ENCODE measurements at regions of chr4 and their contacts with region 1.

Region 1: DNA sequence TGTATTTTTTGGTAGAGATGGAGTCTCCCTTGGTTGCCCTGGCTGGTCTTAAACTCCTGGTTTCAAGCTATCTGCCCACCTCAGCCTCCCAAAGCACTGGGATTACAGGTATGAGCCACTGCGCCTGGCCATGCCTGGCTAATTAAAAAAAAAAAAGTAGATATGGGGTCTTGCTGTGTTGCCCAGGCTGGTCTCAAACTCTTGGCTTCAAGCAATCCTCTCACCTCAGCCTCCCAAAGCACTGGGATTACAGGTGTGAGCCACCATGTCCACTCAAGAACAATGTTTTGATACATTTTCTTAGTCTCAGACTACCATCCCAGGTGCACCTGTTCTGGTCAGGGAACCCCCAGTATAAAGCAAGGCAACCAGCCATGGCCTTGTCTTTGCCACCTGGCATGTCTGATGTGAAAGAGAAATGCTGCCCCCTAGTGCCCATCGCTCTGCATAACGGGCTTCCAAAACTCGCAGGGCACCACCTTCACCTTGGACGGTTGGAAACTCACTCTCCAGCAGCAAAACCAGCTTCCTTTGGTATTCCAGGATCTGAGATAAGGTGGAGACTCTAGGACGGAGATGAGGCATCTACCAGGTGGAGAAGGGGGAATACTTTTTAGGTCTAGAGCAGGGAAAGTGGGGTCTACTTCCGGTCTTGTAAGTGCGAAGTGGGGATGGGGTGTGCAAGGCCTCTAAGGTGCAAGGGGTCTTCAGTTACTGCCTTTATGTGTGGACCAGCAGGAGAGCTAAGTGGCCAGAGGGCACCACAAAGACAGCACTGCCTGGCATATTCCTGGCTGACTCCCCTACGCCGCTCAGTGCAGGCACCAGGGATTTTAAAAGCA is 47.7 kb upstream of the AFAP1 start:
- DNase-seq: peak; percentile 48 to 74 (median 67)
- ATAC-seq: peak; percentile 83
- H3K4me3 ChIP-seq: no peak overlapping the region
- H3K4me3 Mint-ChIP-seq: no peak overlapping the region
- H3K27ac ChIP-seq: no peak overlapping the region
- H3K27ac Mint-ChIP-seq: peak overlapping the region in 1 of 9 donors; percentile 67
- H3K4me1 ChIP-seq: no peaks in the 10 kb centered on the region
- H3K4me1 Mint-ChIP-seq: peaks cover 0 to 11% (median 9%) of the 10 kb centered on the region in 7 donors
- H3K27me3 ChIP-seq: no peaks in the 10 kb centered on the region
- H3K27me3 Mint-ChIP-seq: peaks cover 0 to 3% (median 0%) of the 10 kb centered on the region in 5 donors

Region 2: GRCh38 chr4:7192252-7193029 is 794.9 kb before region 1 on chr4 and contains the start of gene SORCS2:
- CTCF ChIA-PET with region 1: no interaction called
- POLR2A ChIA-PET with region 1: no interaction called
- intact Hi-C with region 1: loop called in 1 of 2 experiments (anchors 5 kb)
- DNase-seq: peak in 7 of 9 donors; percentile 25 to 68 (median 34)
- ATAC-seq: peak; percentile 73
- H3K4me3 ChIP-seq: no peak within 1 kb of the TSS
- H3K4me3 Mint-ChIP-seq: peak within 1 kb of the TSS in 8 of 10 donors; percentile 43 to 76 (median 56)
- H3K27ac ChIP-seq: no peak within 1 kb of the TSS
- H3K27ac Mint-ChIP-seq: no peak within 1 kb of the TSS
- H3K4me1 ChIP-seq: no peaks in the 10 kb centered on the region
- H3K4me1 Mint-ChIP-seq: peaks cover 0 to 7% (median 0%) of the 10 kb centered on the region in 7 donors
- H3K27me3 ChIP-seq: peaks cover 0 to 6% of the 10 kb centered on the region in 2 donors
- H3K27me3 Mint-ChIP-seq: peaks cover 38 to 70% (median 60%) of the 10 kb centered on the region in 5 donors
- total RNA-seq, gene SORCS2: 0.10 TPM in 1 of 5 experiments, not detected in the others

Region 3: DNA sequence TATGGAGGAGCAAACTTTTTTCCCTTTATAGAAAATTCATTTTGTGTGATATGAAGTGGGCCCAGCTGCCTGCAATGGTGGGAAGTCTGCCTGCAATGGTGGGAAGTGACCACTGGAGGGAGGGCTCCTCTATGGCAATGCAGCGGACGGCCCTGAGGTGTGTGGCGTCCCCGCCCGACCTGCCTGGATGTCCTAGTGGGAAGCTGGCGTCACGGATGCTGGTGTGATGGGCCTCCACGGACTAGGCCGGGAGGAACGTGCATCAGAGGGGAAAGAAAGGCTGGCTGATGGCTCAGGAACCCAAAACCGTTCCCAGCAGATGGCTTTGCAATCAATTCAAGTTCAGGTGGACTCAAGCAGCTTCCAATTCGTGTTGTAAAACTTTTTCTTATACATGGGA is 225.6 kb before region 1 on chr4:
- CTCF ChIA-PET with region 1: interaction called, 4 read pairs
- POLR2A ChIA-PET with region 1: no interaction called
- intact Hi-C with region 1: loop called in 1 of 2 experiments (anchors 1 kb)
- DNase-seq: peak in 8 of 9 donors; percentile 33 to 65 (median 52)
- ATAC-seq: peak; percentile 74
- H3K4me3 ChIP-seq: no peak overlapping the region
- H3K4me3 Mint-ChIP-seq: peak overlapping the region in 5 of 10 donors; percentile 27 to 49 (median 37)
- H3K27ac ChIP-seq: peak overlapping the region; percentile 10
- H3K27ac Mint-ChIP-seq: peak overlapping the region; percentile 47 to 100 (median 92)
- H3K4me1 ChIP-seq: peaks cover 18 to 30% of the 10 kb centered on the region in 2 donors
- H3K4me1 Mint-ChIP-seq: peaks cover 13 to 49% (median 37%) of the 10 kb centered on the region in 7 donors
- H3K27me3 ChIP-seq: no peaks in the 10 kb centered on the region
- H3K27me3 Mint-ChIP-seq: no peaks in the 10 kb centered on the region

Region 4: DNA sequence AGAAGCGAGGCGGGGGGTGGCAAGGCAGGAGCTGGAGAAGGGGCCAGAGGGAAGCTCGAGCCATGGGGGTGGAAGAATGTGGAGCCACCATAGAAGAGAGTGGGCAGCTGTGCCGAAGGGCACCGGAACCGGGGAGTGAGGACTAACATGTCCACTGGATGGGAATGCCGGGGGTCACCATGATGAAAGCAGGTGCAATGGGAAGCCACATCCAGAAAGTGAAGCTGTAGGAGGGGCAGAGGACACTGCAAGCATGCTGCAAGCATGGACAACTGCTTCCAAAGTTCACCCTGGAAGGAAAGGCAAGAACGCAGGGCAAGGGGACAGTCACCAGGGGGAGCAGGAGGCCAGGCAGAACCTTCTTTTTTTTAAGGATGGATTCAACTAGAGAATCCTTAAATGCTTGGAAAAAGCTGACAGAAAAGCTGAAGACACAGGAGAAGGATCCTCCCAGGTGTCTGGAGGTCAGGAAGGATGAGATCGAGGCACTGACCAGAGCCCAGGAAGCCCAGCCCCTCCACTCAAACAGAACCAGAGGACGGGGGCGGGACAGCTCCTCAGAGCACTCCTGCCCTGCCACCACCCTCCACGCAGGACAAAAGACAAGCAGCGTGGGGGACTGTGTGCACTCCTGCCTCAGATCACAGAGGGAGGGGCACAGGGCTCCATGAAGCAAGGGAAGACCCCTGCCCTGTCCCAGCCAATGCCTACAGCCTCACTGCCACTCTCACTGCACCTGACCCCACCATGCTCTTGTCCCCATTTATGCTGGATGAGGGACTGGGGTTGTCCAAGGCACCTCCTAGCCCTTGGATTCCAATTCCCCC is 216.9 kb before region 1 on chr4:
- CTCF ChIA-PET with region 1: interaction called, 4 read pairs
- POLR2A ChIA-PET with region 1: no interaction called
- intact Hi-C with region 1: loop called in 1 of 2 experiments (anchors 1 kb)
- DNase-seq: peak in 1 of 9 donors; percentile 4
- ATAC-seq: no peak
- H3K4me3 ChIP-seq: peak overlapping the region; percentile 30
- H3K4me3 Mint-ChIP-seq: peak overlapping the region; percentile 45 to 86 (median 70)
- H3K27ac ChIP-seq: peak overlapping the region; percentile 47
- H3K27ac Mint-ChIP-seq: peak overlapping the region; percentile 48 to 90 (median 79)
- H3K4me1 ChIP-seq: peaks cover 8 to 16% of the 10 kb centered on the region in 2 donors
- H3K4me1 Mint-ChIP-seq: peaks cover 8 to 37% (median 31%) of the 10 kb centered on the region in 7 donors
- H3K27me3 ChIP-seq: no peaks in the 10 kb centered on the region
- H3K27me3 Mint-ChIP-seq: no peaks in the 10 kb centered on the region

Region 5: GRCh38 chr4:7843831-7844593 is 143.4 kb before region 1 on chr4:
- CTCF ChIA-PET with region 1: interaction called, 8 read pairs
- POLR2A ChIA-PET with region 1: no interaction called
- intact Hi-C with region 1: loop called (anchors 1 kb)
- DNase-seq: peak; percentile 12 to 66 (median 42)
- ATAC-seq: peak; percentile 84
- H3K4me3 ChIP-seq: no peak overlapping the region
- H3K4me3 Mint-ChIP-seq: peak overlapping the region in 2 of 10 donors; percentile 1 to 45
- H3K27ac ChIP-seq: no peak overlapping the region
- H3K27ac Mint-ChIP-seq: peak overlapping the region in 4 of 9 donors; percentile 10 to 62 (median 22)
- H3K4me1 ChIP-seq: peaks cover 4 to 6% of the 10 kb centered on the region in 2 donors
- H3K4me1 Mint-ChIP-seq: peaks cover 17 to 46% (median 40%) of the 10 kb centered on the region in 7 donors
- H3K27me3 ChIP-seq: no peaks in the 10 kb centered on the region
- H3K27me3 Mint-ChIP-seq: no peaks in the 10 kb centered on the region

Region 6: GRCh38 chr4:7863911-7864681 is 123.3 kb before region 1 on chr4:
- CTCF ChIA-PET with region 1: no interaction called
- POLR2A ChIA-PET with region 1: no interaction called
- intact Hi-C with region 1: loop called in 1 of 2 experiments (anchors 2 kb)
- DNase-seq: peak in 7 of 9 donors; percentile 20 to 68 (median 38)
- ATAC-seq: peak; percentile 60
- H3K4me3 ChIP-seq: no peak overlapping the region
- H3K4me3 Mint-ChIP-seq: peak overlapping the region in 7 of 10 donors; percentile 36 to 75 (median 65)
- H3K27ac ChIP-seq: no peak overlapping the region
- H3K27ac Mint-ChIP-seq: peak overlapping the region; percentile 67 to 96 (median 89)
- H3K4me1 ChIP-seq: peaks cover 0 to 10% of the 10 kb centered on the region in 2 donors
- H3K4me1 Mint-ChIP-seq: peaks cover 8 to 45% (median 33%) of the 10 kb centered on the region in 7 donors
- H3K27me3 ChIP-seq: no peaks in the 10 kb centered on the region
- H3K27me3 Mint-ChIP-seq: peaks cover 0 to 6% (median 0%) of the 10 kb centered on the region in 5 donors

Region 7: DNA sequence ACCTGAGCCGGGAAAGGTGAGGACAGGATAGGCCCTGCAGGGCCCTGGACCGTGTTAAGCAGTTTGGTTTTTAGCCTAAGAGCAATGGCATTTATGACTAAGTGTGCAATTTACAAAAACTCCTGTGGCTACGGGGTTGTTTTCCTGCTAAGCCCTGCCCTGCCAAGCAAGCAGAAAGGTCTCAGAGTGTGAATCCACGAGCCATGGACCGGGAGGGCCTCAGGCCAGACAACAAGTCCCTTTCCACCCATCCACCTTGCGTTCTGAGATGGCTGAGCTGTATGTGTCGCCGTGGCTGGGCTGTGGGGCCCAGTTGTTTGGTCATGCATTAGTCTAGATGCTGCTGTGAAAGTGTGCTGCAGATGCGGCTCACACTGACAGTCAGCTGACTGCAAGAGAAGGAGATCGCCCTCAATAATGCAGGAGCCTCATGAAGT is 13.8 kb before region 1 on chr4:
- CTCF ChIA-PET with region 1: interaction called, 4 read pairs
- POLR2A ChIA-PET with region 1: no interaction called
- intact Hi-C with region 1: loop called in 1 of 2 experiments (anchors 1 kb)
- DNase-seq: no peak
- ATAC-seq: no peak
- H3K4me3 ChIP-seq: no peak overlapping the region
- H3K4me3 Mint-ChIP-seq: peak overlapping the region in 1 of 10 donors; percentile 5
- H3K27ac ChIP-seq: no peak overlapping the region
- H3K27ac Mint-ChIP-seq: peak overlapping the region in 6 of 9 donors; percentile 43 to 100 (median 77)
- H3K4me1 ChIP-seq: peaks cover 16 to 37% of the 10 kb centered on the region in 2 donors
- H3K4me1 Mint-ChIP-seq: peaks cover 24 to 51% (median 33%) of the 10 kb centered on the region in 7 donors
- H3K27me3 ChIP-seq: no peaks in the 10 kb centered on the region
- H3K27me3 Mint-ChIP-seq: peaks cover 0 to under 1% (median 0%) of the 10 kb centered on the region in 5 donors

Region 8: DNA sequence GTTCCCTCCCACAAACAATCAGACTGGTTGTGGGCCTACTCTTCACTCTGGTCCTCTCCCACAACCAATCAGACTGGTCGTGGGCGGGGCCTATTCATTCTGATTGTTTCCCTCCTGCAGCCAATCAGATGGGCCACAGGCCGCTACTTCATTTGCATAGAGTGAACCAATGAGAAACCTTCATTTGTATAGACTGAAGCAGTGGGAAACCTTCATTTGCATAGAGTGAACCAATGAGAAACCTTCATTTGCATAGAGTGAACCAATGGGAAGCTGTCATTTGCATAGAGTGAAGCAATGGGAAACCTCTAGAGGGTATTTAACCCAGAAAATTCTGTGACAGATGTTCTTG is 508.5 kb after region 1 on chr4:
- CTCF ChIA-PET with region 1: no interaction called
- POLR2A ChIA-PET with region 1: no interaction called
- intact Hi-C with region 1: no loop called
- DNase-seq: no peak
- ATAC-seq: no peak
- H3K4me3 ChIP-seq: no peak overlapping the region
- H3K4me3 Mint-ChIP-seq: no peak overlapping the region
- H3K27ac ChIP-seq: no peak overlapping the region
- H3K27ac Mint-ChIP-seq: no peak overlapping the region
- H3K4me1 ChIP-seq: no peaks in the 10 kb centered on the region
- H3K4me1 Mint-ChIP-seq: no peaks in the 10 kb centered on the region
- H3K27me3 ChIP-seq: no peaks in the 10 kb centered on the region
- H3K27me3 Mint-ChIP-seq: no peaks in the 10 kb centered on the region